Calu3 (cell line): ENCODE measurements at regions of chr6 and their contacts with region 1.

Region 1: GRCh38 chr6:46925563-46926253 is 4.0 kb upstream of the ADGRF5 start:
- DNase-seq: peak; percentile 79
- H3K4me3 Mint-ChIP-seq: peak overlapping the region; percentile 19
- H3K27ac Mint-ChIP-seq: peak overlapping the region; percentile 88
- H3K4me1 Mint-ChIP-seq: peaks cover 64% of the 10 kb centered on the region
- H3K27me3 Mint-ChIP-seq: no peaks in the 10 kb centered on the region
- CTCF ChIP-seq: no peak

Region 2: GRCh38 chr6:46876126-46876525 is 49.6 kb before region 1 on chr6:
- CTCF ChIA-PET with region 1: no interaction called
- intact Hi-C with region 1: loop called (anchors 5 kb)
- DNase-seq: peak; percentile 83
- H3K4me3 Mint-ChIP-seq: no peak overlapping the region
- H3K27ac Mint-ChIP-seq: peak overlapping the region; percentile 40
- H3K4me1 Mint-ChIP-seq: peaks cover 33% of the 10 kb centered on the region
- H3K27me3 Mint-ChIP-seq: no peaks in the 10 kb centered on the region
- CTCF ChIP-seq: no peak

Region 3: DNA sequence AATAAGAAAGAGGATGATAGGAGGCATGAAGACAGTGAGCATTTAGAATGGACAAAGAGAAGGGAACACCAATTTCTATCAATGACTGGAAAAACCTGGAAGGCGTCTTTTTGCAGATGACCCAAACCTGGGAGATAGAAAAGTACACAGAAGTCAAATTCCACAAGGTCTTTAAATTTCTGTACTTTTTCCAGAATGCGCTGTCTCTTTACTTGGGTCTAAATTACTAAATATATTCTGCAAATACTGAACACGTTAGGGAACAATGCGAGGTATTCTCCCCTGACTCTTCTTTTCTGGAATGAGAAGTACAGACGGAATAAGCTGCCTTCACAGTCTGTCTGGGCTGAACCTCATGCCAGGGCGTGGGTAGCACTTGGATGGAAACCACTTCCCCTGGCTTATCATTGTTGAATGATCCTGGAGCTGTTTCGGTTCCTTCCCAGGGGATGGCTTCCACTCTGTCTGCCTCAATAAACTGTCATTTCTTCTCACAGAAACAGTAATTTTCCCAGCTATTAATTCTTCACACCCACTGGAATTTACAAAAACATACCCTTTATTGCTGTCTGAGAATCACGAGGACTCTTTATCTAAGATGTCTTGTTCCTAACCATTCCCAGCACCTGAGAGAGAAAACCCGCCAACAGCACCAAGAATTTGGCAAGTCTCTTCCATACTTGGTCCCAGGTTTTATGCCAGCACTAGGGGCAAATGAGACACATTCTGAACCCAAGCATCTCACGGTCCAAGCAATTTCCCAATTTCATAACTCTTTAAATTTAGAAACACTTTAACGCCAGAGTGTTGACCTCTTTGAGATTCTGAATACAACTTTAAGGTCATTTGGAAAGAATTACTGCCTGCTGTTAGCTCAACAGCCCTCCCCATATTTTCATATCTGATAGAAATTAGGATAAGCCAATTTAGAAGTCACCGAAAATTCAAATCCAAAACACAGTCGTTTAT is 39.1 kb after region 1 on chr6:
- CTCF ChIA-PET with region 1: no interaction called
- intact Hi-C with region 1: loop called (anchors 5 kb)
- DNase-seq: no peak
- H3K4me3 Mint-ChIP-seq: no peak overlapping the region
- H3K27ac Mint-ChIP-seq: no peak overlapping the region
- H3K4me1 Mint-ChIP-seq: peaks cover 15% of the 10 kb centered on the region
- H3K27me3 Mint-ChIP-seq: no peaks in the 10 kb centered on the region
- CTCF ChIP-seq: no peak